Endothelial cell of umbilical vein (primary cell): ENCODE measurements at regions of chr12 and their contacts with region 1.

Region 1: DNA sequence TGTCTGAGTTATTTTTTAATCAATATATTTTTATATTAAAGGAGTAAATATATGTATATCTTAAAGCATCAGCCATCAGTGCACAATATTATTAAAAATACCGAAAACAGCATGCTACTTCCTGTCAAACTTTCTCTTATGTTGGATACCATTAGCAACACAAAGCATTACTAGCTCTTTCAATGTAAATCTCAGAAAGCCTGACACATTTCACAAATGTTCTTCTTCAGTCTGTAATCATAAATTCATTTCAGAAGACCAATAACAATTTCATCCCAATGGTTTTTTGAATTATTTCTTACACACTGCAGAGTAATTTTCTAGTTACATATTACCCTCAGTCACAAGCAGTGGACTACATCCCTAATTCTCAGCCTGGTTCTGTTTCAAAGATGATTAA is 226.9 kb downstream of the LRRK2 start:
- DNase-seq: no peak
- H3K4me3 ChIP-seq: no peak overlapping the region
- H3K27ac ChIP-seq: no peak overlapping the region
- H3K4me1 ChIP-seq: no peaks in the 10 kb centered on the region
- H3K27me3 ChIP-seq: no peaks in the 10 kb centered on the region
- CTCF ChIP-seq: no peak
- POLR2A ChIP-seq: no peak

Region 2: DNA sequence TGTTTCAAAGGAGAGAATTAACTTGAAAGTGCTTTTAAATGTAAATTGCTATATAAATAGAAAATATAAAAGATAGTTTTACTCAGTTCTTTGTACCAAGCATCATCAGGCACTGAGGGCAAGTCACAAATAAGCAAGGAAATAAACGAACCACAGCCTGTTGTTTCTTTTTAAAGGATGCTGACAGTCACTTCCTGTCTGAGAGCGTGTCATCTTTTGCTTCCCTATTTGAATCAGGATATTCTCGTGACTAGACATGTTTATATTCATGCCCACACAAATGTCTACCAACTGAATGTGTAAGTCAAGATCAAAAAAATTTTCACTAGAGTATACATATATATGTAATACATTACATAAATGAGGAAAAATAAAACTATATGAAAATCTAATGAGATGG is 314.4 kb before region 1 on chr12:
- CTCF ChIA-PET with region 1: no interaction called
- POLR2A ChIA-PET with region 1: no interaction called
- dilution Hi-C with region 1: no loop called
- intact Hi-C with region 1: no loop called
- DNase-seq: peak; percentile 13
- H3K4me3 ChIP-seq: no peak overlapping the region
- H3K27ac ChIP-seq: no peak overlapping the region
- H3K4me1 ChIP-seq: no peaks in the 10 kb centered on the region
- H3K27me3 ChIP-seq: peaks cover 0 to 3% of the 10 kb centered on the region in 2 experiments
- CTCF ChIP-seq: no peak
- POLR2A ChIP-seq: no peak

Region 3: GRCh38 chr12:40375076-40375475 is 76.6 kb before region 1 on chr12:
- CTCF ChIA-PET with region 1: no interaction called
- POLR2A ChIA-PET with region 1: no interaction called
- dilution Hi-C with region 1: no loop called
- intact Hi-C with region 1: no loop called
- DNase-seq: peak; percentile 38
- H3K4me3 ChIP-seq: no peak overlapping the region
- H3K27ac ChIP-seq: no peak overlapping the region
- H3K4me1 ChIP-seq: no peaks in the 10 kb centered on the region
- H3K27me3 ChIP-seq: no peaks in the 10 kb centered on the region
- CTCF ChIP-seq: peak in 1 of 2 donors; percentile 27
- POLR2A ChIP-seq: no peak

Region 4: GRCh38 chr12:41701922-41702601 is 1250.4 kb after region 1 on chr12:
- CTCF ChIA-PET with region 1: no interaction called
- POLR2A ChIA-PET with region 1: no interaction called
- dilution Hi-C with region 1: no loop called
- intact Hi-C with region 1: loop called (anchors 5 kb)
- DNase-seq: no peak
- H3K4me3 ChIP-seq: no peak overlapping the region
- H3K27ac ChIP-seq: no peak overlapping the region
- H3K4me1 ChIP-seq: no peaks in the 10 kb centered on the region
- H3K27me3 ChIP-seq: no peaks in the 10 kb centered on the region
- CTCF ChIP-seq: no peak
- POLR2A ChIP-seq: no peak